ENCODE measurements at regions of chr5 and their contacts with region 1.

Region 1: GRCh38 chr5:14264604-14265316 is 121.6 kb downstream of the TRIO start:
- ATAC-seq: peak; percentile 86 to 98 (median 94)
- H3K4me3 ChIP-seq: peak overlapping the region; percentile 23 to 34 (median 28)
- H3K27ac ChIP-seq: peak overlapping the region in 1 of 2 donors; percentile 11
- H3K4me1 ChIP-seq: peaks cover 50 to 56% of the 10 kb centered on the region in 2 donors

Region 2: DNA sequence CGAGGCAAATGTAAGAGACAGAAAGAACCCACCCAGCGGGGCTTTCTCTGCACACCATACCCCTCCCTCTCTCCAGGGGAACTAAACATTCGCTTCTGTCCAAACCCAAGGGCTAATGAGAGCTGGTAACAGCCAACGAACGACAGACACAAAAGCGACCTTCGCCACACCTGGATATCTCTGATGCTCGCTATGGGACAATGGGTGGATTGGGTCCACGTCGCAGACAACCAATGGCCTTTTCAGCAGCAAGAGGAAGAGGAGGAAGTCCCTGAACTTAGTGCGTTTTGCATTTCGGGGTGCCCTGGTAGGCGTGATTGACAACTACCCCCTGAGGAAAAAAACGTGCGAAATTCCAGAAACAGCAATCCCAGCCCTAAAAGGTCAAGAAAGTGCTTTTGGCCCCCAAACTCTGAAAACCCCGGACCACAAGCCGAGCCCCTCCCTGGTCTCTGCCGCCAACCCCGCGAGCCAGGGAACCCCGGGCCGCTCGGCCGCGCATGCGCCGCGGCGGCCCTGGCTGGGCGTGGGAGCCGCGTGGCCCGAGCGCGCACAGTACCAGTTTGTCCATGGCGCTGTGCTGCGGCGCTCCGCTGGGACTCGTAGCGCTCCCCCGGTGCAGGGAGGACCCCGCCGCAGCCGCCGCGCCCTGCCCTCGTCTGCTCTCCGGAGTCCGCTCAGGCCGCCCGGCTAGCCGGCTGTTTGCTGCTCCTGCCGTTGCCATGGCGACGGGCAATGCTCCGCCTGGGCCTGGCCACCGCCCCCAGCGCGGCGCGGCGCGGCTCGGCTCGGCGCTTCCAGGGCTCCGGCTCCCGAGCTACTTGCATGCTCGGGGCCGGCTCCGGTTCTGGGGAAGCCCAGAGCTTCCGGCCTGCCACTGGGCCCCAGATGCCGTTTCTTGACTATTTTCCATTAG is 253.4 kb before region 1 on chr5:
- in situ Hi-C with region 1: loop called in 1 of 9 experiments (anchors 25 kb)
- ATAC-seq: peak; percentile 95 to 100 (median 99)
- H3K4me3 ChIP-seq: peak overlapping the region; percentile 33 to 55 (median 44)
- H3K27ac ChIP-seq: peak overlapping the region; percentile 25 to 48
- H3K4me1 ChIP-seq: peaks cover 0 to 3% of the 10 kb centered on the region in 2 donors

Region 3: GRCh38 chr5:14108170-14108996 is 156.4 kb before region 1 on chr5:
- in situ Hi-C with region 1: loop called in 1 of 9 experiments (anchors 25 kb)
- ATAC-seq: peak in 6 of 8 experiments; percentile 36 to 90 (median 72)
- H3K4me3 ChIP-seq: no peak overlapping the region
- H3K27ac ChIP-seq: no peak overlapping the region
- H3K4me1 ChIP-seq: no peaks in the 10 kb centered on the region

Region 4: DNA sequence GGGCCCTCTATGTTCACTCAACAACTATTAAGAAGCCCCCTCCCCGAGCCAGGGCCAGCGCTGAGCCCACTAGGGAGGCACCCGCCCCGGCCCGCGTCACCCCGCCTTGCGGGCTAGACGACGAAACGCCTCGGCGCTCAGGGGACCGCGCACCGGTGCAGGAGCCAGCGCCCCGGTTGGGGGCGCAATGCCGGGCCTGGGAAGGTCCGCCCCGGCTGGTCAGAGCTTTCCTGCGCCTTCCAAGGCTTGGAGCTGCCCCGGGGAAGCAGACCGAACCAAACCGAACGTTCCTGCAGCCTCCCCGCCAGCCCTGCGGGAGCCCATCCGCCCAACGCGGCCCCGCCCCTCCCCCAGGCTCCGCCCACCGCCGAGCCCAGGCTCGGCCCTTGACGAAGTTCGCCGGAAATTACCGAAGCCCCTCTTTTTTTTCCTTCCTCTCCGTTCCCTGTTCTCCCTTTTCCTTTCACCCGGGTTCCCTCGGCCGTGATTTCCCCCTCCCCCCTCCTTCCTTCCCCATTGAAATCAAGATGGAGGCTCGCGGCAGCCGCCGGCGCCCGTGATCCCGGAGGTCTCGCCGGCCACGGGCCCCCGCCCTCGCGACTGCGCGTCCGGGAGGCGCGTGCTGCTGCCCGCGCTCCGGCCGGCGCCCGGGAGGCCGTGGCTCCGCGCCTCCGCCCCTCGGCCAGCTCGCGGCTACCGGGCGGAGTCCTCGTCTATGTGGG is 121.8 kb before region 1 on chr5 and contains the start of gene TRIO:
- in situ Hi-C with region 1: loop called in 1 of 9 experiments (anchors 25 kb)
- ATAC-seq: peak; percentile 54 to 83 (median 78)
- H3K4me3 ChIP-seq: peak within 1 kb of the TSS; percentile 69 to 96 (median 86)
- H3K27ac ChIP-seq: peak within 1 kb of the TSS; percentile 88 to 96
- H3K4me1 ChIP-seq: peaks cover 22 to 30% of the 10 kb centered on the region in 2 donors
- total RNA-seq, gene TRIO: 39.7 to 162 (median 92.9) TPM

Region 5: GRCh38 chr5:14156650-14157493 is 107.9 kb before region 1 on chr5:
- in situ Hi-C with region 1: loop called in 1 of 9 experiments (anchors 25 kb)
- ATAC-seq: peak; percentile 80 to 86 (median 84)
- H3K4me3 ChIP-seq: peak overlapping the region in 1 of 5 donors; percentile 13
- H3K27ac ChIP-seq: peak overlapping the region in 1 of 2 donors; percentile 29
- H3K4me1 ChIP-seq: peaks cover 38 to 49% of the 10 kb centered on the region in 2 donors

Region 6: GRCh38 chr5:14316471-14316870 is 51.7 kb after region 1 on chr5:
- in situ Hi-C with region 1: no loop called
- ATAC-seq: no peak
- H3K4me3 ChIP-seq: no peak overlapping the region
- H3K27ac ChIP-seq: no peak overlapping the region
- H3K4me1 ChIP-seq: no peaks in the 10 kb centered on the region

Measured in motor neuron (in vitro differentiated cells).